Naive thymus-derived CD8-positive, alpha-beta T cell (primary cell): ENCODE measurements at regions of chr14 and their contacts with region 1.

Region 1: GRCh38 chr14:22766456-22767322 is at the start of gene OXA1L:
- DNase-seq: peak; percentile 84 to 99 (median 96)
- ATAC-seq: peak; percentile 92 to 93
- H3K4me3 Mint-ChIP-seq: peak within 1 kb of the TSS; percentile 86 to 97 (median 91)
- H3K27ac Mint-ChIP-seq: peak within 1 kb of the TSS; percentile 94 to 98 (median 98)
- H3K4me1 Mint-ChIP-seq: peaks cover 21 to 36% (median 33%) of the 10 kb centered on the region in 4 donors
- H3K27me3 Mint-ChIP-seq: no peaks in the 10 kb centered on the region
- polyA plus RNA-seq, gene OXA1L: 56.3 to 67.4 (median 57.1) TPM

Region 2: DNA sequence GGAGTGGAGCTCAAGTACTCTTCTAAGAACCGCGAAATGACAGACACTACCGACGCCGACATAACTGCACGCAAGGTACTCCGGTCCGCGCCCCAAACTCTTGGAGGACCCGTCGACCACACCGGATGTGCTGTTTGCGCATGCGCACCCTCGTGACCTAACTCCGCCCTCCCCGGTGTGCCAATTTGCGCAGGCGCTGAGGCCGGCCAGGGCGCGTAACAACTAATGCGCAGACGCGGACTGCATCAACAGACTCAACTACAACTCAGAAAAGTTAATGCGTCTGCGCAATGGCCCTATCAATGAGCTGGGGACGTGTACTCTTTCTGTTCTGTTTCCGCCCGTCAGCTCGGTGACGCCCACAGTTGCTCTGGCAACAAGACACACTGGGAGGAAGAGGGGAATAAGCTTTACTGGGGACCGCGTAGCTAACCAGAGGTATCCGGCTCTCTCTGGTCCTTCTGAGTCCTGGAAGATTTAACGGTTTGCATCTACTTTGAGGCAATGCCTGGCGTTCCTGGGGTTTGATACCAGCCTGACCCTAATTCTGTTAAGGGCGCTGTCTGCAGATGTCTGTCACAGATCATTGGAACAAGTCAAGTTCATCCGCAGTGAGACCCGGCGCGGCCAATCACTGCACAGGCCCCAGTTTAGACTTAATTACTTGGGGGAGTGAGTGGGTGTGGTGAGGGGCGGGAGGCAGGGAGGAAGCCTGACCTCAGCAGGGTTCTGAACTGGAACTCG is 177.4 kb before region 1 on chr14 and contains the start of gene DAD1:
- POLR2A ChIA-PET with region 1: interaction called, 15 read pairs
- DNase-seq: peak; percentile 98 to 100 (median 100)
- ATAC-seq: peak; percentile 88 to 93
- H3K4me3 Mint-ChIP-seq: peak within 1 kb of the TSS; percentile 90 to 99 (median 98)
- H3K27ac Mint-ChIP-seq: peak within 1 kb of the TSS; percentile 95 to 100 (median 99)
- H3K4me1 Mint-ChIP-seq: peaks cover 34 to 60% (median 55%) of the 10 kb centered on the region in 4 donors
- H3K27me3 Mint-ChIP-seq: peaks cover 0 to 5% (median 0%) of the 10 kb centered on the region in 5 donors
- polyA plus RNA-seq, gene DAD1: 610 to 660 (median 642) TPM

Region 3: GRCh38 chr14:22778084-22778483 is 11.4 kb after region 1 on chr14:
- POLR2A ChIA-PET with region 1: interaction called, 14 read pairs
- DNase-seq: no peak
- ATAC-seq: no peak
- H3K4me3 Mint-ChIP-seq: no peak overlapping the region
- H3K27ac Mint-ChIP-seq: peak overlapping the region in 2 of 10 donors; percentile 33 to 68
- H3K4me1 Mint-ChIP-seq: peaks cover 0 to 10% (median 1%) of the 10 kb centered on the region in 4 donors
- H3K27me3 Mint-ChIP-seq: no peaks in the 10 kb centered on the region